ENCODE measurements at regions of chr12 and their contacts with region 1.

Region 1: GRCh38 chr12:110330544-110330943 is 49.5 kb downstream of the ATP2A2 start:
- DNase-seq: no peak
- ATAC-seq: peak; percentile 36
- H3K4me3 Mint-ChIP-seq: no peak overlapping the region
- H3K27ac Mint-ChIP-seq: no peak overlapping the region
- H3K4me1 Mint-ChIP-seq: peaks cover 12% of the 10 kb centered on the region
- H3K27me3 Mint-ChIP-seq: no peaks in the 10 kb centered on the region

Region 2: DNA sequence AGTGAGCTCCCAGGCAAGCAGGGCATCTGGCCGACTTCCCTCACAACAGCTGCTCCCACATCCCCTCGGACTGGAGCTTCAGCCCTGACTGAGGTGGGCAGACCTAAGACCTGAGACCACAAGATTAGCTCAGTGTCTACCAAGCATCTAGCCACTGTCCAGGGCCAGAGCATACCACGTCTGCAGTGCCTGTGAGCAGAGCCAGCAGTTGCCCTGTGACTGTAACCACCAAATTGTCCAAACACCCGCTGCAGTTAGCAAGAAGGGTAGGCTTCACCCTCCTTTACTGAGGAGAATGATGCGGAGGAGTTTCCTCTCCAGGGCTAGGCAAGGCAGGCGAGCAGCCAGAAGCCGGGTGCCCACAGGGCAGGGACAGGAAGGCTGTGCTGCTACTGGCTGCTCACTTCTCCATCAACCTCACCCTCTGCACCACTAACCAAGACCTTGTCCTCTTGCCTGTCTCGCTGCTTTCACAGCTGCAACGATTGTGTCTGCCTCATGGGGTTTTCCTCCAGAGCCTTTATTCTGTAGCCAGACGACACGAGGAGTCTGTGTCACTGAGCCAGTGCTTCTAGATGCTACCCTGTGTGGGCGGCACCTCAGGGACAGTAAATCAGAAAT is 19.1 kb after region 1 on chr12:
- CTCF ChIA-PET with region 1: interaction called, 13 read pairs
- POLR2A ChIA-PET with region 1: interaction called, 4 read pairs
- DNase-seq: peak; percentile 61
- ATAC-seq: peak; percentile 80
- H3K4me3 Mint-ChIP-seq: peak overlapping the region; percentile 30
- H3K27ac Mint-ChIP-seq: peak overlapping the region; percentile 87
- H3K4me1 Mint-ChIP-seq: peaks cover 46% of the 10 kb centered on the region
- H3K27me3 Mint-ChIP-seq: no peaks in the 10 kb centered on the region

Measured in activated CD8-positive, alpha-beta T cell treated with anti-CD3 and anti-CD28 coated beads, Interleukin-2, amount 10 ng/mL, durations not matched to agents 7 days and 5 days (primary cell).